Calu3 (cell line): ENCODE measurements at regions of chr3 and their contacts with region 1.

Region 1: DNA sequence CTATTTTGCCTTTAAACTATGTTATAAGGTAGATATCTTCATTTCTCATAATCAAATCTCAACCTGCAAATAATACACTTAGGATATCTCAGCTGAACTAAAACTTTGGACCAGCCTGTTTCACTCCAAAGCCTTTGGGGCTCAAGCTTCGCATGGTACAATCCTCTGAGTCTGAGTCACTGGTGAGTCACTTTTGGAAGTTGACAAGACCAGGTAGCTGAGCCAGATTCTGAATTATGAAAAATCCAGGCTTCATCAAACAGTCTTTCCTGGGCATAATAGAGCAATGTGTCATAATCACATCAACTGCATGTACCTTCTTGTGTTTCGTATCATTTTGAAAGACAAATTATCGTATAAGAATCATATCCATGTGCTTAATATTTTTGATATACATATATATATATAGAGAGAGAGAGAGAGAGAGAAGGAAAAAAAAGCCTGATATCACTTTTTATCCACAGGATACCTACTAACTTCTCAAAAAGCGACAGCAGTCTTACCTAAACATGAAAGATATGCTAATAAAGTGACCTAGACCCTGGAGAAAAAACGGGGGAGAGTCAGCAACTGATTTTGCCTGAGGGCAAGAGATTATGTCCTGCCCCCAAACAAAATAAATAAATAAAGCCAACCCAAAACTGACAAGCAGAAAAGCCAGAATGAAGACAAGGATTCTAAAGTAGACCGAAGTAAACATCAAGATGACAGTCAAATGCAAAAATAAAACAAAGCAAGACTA is 263.9 kb upstream of the TGFBR2 start:
- DNase-seq: peak; percentile 63
- H3K4me3 Mint-ChIP-seq: peak overlapping the region; percentile 46
- H3K27ac Mint-ChIP-seq: peak overlapping the region; percentile 40
- H3K4me1 Mint-ChIP-seq: peaks cover 58% of the 10 kb centered on the region
- H3K27me3 Mint-ChIP-seq: no peaks in the 10 kb centered on the region
- CTCF ChIP-seq: no peak

Region 2: GRCh38 chr3:30286007-30286669 is 56.4 kb before region 1 on chr3:
- CTCF ChIA-PET with region 1: no interaction called
- intact Hi-C with region 1: loop called (anchors 5 kb)
- DNase-seq: peak; percentile 58
- H3K4me3 Mint-ChIP-seq: no peak overlapping the region
- H3K27ac Mint-ChIP-seq: no peak overlapping the region
- H3K4me1 Mint-ChIP-seq: peaks cover 54% of the 10 kb centered on the region
- H3K27me3 Mint-ChIP-seq: no peaks in the 10 kb centered on the region
- CTCF ChIP-seq: no peak

Region 3: DNA sequence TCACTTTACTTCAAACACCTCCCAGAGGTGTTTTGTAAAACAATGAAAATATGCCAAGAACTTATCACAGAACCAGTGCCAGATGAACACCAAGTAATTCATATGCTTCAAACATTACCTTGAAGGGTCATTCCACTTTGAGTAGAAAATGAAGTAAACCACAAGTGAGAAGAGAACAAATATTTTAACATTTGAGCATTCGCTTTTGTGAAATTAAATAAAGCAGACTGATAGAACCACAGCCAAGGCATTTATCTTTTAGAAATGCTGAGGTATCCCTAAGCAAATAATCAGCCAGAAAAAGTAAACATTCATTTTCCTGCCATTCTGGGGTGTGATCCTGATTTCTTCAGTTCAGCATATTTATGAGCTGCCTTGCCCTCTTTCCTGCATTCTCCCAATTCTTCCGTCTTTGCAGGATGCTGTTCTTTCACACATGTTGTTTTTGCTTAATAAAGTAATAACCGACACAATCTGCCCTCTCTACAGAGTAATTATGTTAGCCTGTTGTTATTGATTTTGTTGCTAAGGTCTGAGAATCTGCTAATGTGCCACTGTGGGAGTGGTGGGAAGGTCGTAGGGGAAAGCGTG is 28.3 kb after region 1 on chr3:
- CTCF ChIA-PET with region 1: interaction called, 4 read pairs
- intact Hi-C with region 1: loop called (anchors 2 kb)
- DNase-seq: peak; percentile 18
- H3K4me3 Mint-ChIP-seq: peak overlapping the region; percentile 4
- H3K27ac Mint-ChIP-seq: peak overlapping the region; percentile 5
- H3K4me1 Mint-ChIP-seq: peaks cover 32% of the 10 kb centered on the region
- H3K27me3 Mint-ChIP-seq: no peaks in the 10 kb centered on the region
- CTCF ChIP-seq: no peak

Region 4: GRCh38 chr3:30502742-30503073 is 160.2 kb after region 1 on chr3:
- CTCF ChIA-PET with region 1: no interaction called
- intact Hi-C with region 1: loop called (anchors 5 kb)
- DNase-seq: no peak
- H3K4me3 Mint-ChIP-seq: no peak overlapping the region
- H3K27ac Mint-ChIP-seq: peak overlapping the region; percentile 41
- H3K4me1 Mint-ChIP-seq: peaks cover 51% of the 10 kb centered on the region
- H3K27me3 Mint-ChIP-seq: no peaks in the 10 kb centered on the region
- CTCF ChIP-seq: no peak

Region 5: DNA sequence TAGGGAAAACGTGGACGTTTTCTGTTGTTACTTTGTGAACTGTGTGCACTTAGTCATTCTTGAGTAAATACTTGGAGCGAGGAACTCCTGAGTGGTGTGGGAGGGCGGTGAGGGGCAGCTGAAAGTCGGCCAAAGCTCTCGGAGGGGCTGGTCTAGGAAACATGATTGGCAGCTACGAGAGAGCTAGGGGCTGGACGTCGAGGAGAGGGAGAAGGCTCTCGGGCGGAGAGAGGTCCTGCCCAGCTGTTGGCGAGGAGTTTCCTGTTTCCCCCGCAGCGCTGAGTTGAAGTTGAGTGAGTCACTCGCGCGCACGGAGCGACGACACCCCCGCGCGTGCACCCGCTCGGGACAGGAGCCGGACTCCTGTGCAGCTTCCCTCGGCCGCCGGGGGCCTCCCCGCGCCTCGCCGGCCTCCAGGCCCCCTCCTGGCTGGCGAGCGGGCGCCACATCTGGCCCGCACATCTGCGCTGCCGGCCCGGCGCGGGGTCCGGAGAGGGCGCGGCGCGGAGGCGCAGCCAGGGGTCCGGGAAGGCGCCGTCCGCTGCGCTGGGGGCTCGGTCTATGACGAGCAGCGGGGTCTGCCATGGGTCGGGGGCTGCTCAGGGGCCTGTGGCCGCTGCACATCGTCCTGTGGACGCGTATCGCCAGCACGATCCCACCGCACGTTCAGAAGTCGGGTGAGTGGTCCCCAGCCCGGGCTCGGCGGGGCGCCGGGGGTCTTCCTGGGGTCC is 264.0 kb after region 1 on chr3 and contains the start of gene TGFBR2:
- CTCF ChIA-PET with region 1: no interaction called
- intact Hi-C with region 1: loop called (anchors 5 kb)
- DNase-seq: peak; percentile 95
- H3K4me3 Mint-ChIP-seq: peak within 1 kb of the TSS; percentile 66
- H3K27ac Mint-ChIP-seq: peak within 1 kb of the TSS; percentile 82
- H3K4me1 Mint-ChIP-seq: peaks cover 49% of the 10 kb centered on the region
- H3K27me3 Mint-ChIP-seq: no peaks in the 10 kb centered on the region
- CTCF ChIP-seq: no peak
- total RNA-seq, gene TGFBR2: 103 and 105 TPM in 2 replicates